Cardiac septum (tissue), 1 donor: ENCODE measurements at regions of chrX and their contacts with region 1.

Region 1: GRCh38 chrX:115147220-115147619 is 42.0 kb upstream of the RBMXL3 start:
- DNase-seq: no peak

Region 2: GRCh38 chrX:114619874-114620273 is 527.3 kb before region 1 on chrX:
- intact Hi-C with region 1: loop called (anchors 10 kb)
- DNase-seq: no peak

Region 3: GRCh38 chrX:114959729-114960128 is 187.5 kb before region 1 on chrX:
- intact Hi-C with region 1: no loop called
- DNase-seq: no peak

Region 4: GRCh38 chrX:114985967-114986592 is 161.1 kb before region 1 on chrX:
- intact Hi-C with region 1: no loop called
- DNase-seq: no peak

Region 5: DNA sequence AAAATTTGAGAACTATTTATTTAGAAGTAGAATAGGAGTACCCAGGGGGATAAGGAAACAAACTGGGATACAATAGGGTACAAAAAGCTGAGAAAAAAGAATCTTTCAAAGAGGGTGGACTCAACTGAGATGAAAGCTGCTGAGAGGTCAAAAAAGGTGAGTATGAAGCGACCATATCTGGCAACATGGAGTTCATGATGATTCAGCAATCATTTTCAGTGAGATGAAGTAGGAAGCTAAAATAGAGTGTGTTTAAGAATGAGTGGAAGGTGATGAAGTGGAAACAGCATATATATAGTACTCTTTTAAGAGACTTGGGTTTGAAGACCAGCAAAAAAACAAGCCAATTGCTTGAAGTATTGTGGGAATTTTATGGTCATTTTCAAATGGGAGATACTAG is 57.8 kb before region 1 on chrX:
- intact Hi-C with region 1: no loop called
- DNase-seq: no peak

Region 6: DNA sequence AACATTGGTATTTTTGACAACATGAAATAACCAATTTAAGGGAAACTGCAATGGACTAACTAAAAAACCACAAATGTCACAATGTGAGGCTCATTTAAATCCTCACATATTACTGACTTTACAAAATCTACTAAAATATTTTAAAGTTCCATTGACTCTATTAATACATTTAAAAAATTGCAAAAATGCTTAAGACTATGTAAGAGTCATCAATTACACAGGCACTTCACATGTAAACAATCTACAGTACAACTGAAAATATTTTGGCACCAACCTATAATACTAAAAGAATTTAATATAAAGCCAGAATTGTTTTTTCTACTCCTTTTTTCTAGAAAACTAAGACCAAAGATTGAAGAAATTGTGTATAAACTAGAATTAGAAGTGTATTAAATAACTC is 34.8 kb before region 1 on chrX:
- intact Hi-C with region 1: no loop called
- DNase-seq: no peak